ENCODE measurements at regions of chr7 and their contacts with region 1.

Region 1: GRCh38 chr7:118005026-118005425 is 131.8 kb upstream of the CTTNBP2 start:
- DNase-seq: no peak
- ATAC-seq: no peak
- H3K4me3 ChIP-seq: no peak overlapping the region
- H3K27ac ChIP-seq: no peak overlapping the region
- H3K4me1 ChIP-seq: no peaks in the 10 kb centered on the region
- H3K27me3 ChIP-seq: no peaks in the 10 kb centered on the region
- CTCF ChIP-seq: no peak
- EP300 ChIP-seq: no peak
- POLR2A ChIP-seq: no peak
- RAD21 ChIP-seq: no peak

Region 2: GRCh38 chr7:117961235-117961634 is 43.8 kb before region 1 on chr7:
- CTCF ChIA-PET with region 1: no interaction called
- POLR2A ChIA-PET with region 1: no interaction called
- in situ Hi-C with region 1: no loop called
- intact Hi-C with region 1: loop called (anchors 1 kb)
- DNase-seq: no peak
- ATAC-seq: no peak
- H3K4me3 ChIP-seq: no peak overlapping the region
- H3K27ac ChIP-seq: no peak overlapping the region
- H3K4me1 ChIP-seq: no peaks in the 10 kb centered on the region
- H3K27me3 ChIP-seq: no peaks in the 10 kb centered on the region
- CTCF ChIP-seq: no peak
- EP300 ChIP-seq: no peak
- POLR2A ChIP-seq: no peak
- RAD21 ChIP-seq: no peak